Activated T-helper 2 cell treated with anti-CD3 and anti-CD28 coated beads, Interferon-gamma antibody, Interleukin-2, Interleukin-4, amounts not matched to agents 10 μg/mL and 5 μg/mL and 100 μg/mL, durations not matched to agents 14 hours and 24 hours and 36 hours (primary cell): ENCODE measurements at regions of chr12 and their contacts with region 1.

Region 1: GRCh38 chr12:55738123-55739024 is 4.5 kb upstream of the GDF11 start:
- DNase-seq: peak; percentile 69
- H3K4me3 Mint-ChIP-seq: peak overlapping the region; percentile 78
- H3K27ac Mint-ChIP-seq: peak overlapping the region; percentile 74
- H3K4me1 Mint-ChIP-seq: peaks cover 29% of the 10 kb centered on the region
- H3K27me3 Mint-ChIP-seq: no peaks in the 10 kb centered on the region

Region 2: DNA sequence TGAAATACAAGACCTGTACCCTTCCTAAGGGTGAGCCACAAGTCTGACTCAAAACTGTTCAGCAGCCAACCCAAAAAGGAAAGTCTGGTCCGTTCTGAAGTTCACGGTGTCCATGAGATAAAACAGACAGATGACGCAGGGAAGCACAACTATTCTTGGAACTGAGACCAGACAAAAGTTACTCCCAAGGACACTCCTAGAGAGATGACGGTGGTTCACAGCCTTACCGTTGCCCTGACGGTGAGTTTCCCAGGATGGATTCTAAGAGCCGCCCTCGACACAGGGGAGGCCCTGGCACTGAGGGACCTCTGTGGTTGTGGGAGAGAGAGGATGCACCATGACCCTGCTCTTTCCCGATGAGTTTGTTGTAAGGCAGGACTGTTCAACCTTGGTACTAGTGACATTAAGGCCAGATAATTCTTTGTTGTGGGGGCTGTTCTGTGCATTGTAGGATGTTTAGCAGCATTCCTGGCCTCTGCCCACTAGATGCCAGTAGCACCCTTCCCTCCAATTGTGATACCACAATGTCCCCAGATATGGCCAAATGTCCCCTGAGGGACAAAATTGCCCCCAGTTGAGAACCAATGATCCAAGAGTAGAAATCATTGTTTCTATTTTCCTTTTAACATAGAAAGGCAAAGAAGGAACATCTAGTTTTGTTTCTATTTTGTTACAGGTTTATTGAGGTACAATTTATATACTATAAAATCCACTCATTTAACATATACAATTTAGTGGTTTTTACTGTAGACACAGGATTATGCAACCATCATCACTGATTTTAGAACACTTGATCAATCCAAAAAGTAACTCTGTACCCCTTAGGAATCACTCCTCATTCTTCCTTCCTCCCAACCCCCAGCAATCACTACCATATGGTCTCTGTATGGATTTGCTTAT is 78.6 kb before region 1 on chr12:
- intact Hi-C with region 1: loop called (anchors 2 kb)
- DNase-seq: no peak
- H3K4me3 Mint-ChIP-seq: no peak overlapping the region
- H3K27ac Mint-ChIP-seq: no peak overlapping the region
- H3K4me1 Mint-ChIP-seq: no peaks in the 10 kb centered on the region
- H3K27me3 Mint-ChIP-seq: peaks cover 25% of the 10 kb centered on the region

Region 3: GRCh38 chr12:55748230-55748993 is 10.0 kb after region 1 on chr12:
- intact Hi-C with region 1: no loop called
- DNase-seq: no peak
- H3K4me3 Mint-ChIP-seq: no peak overlapping the region
- H3K27ac Mint-ChIP-seq: no peak overlapping the region
- H3K4me1 Mint-ChIP-seq: peaks cover 19% of the 10 kb centered on the region
- H3K27me3 Mint-ChIP-seq: no peaks in the 10 kb centered on the region

Region 4: GRCh38 chr12:55760663-55761062 is 22.3 kb after region 1 on chr12:
- intact Hi-C with region 1: loop called (anchors 1 kb)
- DNase-seq: no peak
- H3K4me3 Mint-ChIP-seq: no peak overlapping the region
- H3K27ac Mint-ChIP-seq: peak overlapping the region; percentile 62
- H3K4me1 Mint-ChIP-seq: peaks cover 10% of the 10 kb centered on the region
- H3K27me3 Mint-ChIP-seq: no peaks in the 10 kb centered on the region

Region 5: DNA sequence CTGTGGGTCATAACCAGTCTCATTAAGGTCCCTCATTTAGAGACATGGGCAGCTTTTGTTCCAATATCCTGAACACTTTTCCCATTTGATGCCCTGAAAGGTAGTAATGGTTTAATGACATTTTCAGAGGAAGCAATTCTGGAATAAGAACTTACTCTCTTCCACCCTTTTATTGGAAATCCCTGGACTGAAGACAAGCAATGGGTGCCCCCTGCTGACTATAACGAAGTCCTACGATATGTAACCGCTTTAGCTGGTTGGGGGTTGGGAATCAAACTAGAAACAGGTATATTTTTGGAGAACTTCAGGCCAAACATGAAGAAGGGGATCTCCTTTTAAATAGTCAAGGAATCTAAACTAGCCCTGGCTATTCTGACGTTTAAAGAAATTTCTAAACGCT is 58.7 kb after region 1 on chr12:
- intact Hi-C with region 1: loop called (anchors 1 kb)
- DNase-seq: no peak
- H3K4me3 Mint-ChIP-seq: no peak overlapping the region
- H3K27ac Mint-ChIP-seq: peak overlapping the region; percentile 45
- H3K4me1 Mint-ChIP-seq: peaks cover 20% of the 10 kb centered on the region
- H3K27me3 Mint-ChIP-seq: no peaks in the 10 kb centered on the region

Region 6: DNA sequence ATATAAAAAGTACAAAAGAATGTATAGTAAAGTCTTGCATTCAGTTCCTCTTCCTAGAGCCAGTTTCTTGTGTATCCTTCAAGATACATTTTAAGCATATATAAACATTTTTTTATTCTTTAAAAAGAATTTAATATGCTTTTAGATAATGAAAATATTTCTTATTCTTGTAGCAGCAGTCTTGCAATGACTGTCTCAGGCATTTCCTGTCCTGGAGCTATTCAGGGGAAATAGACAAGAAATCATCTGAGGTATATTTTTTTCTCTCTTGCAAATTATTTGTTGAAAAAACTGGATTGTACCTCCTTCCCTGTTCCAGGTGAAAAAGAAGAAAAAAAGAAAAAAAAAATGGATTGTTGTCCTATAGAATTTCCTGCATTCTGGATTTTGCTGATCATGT is 324.6 kb after region 1 on chr12:
- intact Hi-C with region 1: no loop called
- DNase-seq: no peak
- H3K4me3 Mint-ChIP-seq: no peak overlapping the region
- H3K27ac Mint-ChIP-seq: no peak overlapping the region
- H3K4me1 Mint-ChIP-seq: peaks cover 2% of the 10 kb centered on the region
- H3K27me3 Mint-ChIP-seq: peaks cover 5% of the 10 kb centered on the region

Region 7: GRCh38 chr12:56636675-56637540 is 898.5 kb after region 1 on chr12:
- intact Hi-C with region 1: loop called (anchors 5 kb)
- DNase-seq: peak; percentile 87
- H3K4me3 Mint-ChIP-seq: peak overlapping the region; percentile 97
- H3K27ac Mint-ChIP-seq: peak overlapping the region; percentile 93
- H3K4me1 Mint-ChIP-seq: peaks cover 47% of the 10 kb centered on the region
- H3K27me3 Mint-ChIP-seq: no peaks in the 10 kb centered on the region